PC-9 (cell line): ENCODE measurements at regions of chr4 and their contacts with region 1.

Region 1: DNA sequence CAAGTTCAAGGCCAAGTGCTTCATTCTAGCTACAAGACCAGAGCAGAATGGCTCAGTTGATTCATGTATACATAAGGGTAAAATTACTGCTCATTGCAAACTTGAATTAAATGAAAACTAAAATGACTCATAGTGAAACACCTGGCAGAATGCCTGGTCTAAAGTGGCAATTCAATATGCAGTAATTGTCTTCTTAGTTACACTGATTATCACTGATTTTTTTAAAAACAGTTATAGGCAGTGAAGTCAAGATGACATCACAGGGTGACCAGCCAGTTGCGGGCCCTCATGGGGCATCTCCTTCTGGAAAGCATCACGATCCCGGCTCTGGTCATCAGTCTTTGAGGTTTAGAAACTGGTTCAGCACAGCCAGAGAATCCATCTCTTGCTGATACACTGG is 154.2 kb downstream of the RAB28 start:
- DNase-seq: no peak
- H3K4me3 ChIP-seq: no peak overlapping the region
- H3K27ac ChIP-seq: no peak overlapping the region
- H3K4me1 ChIP-seq: no peaks in the 10 kb centered on the region
- H3K27me3 ChIP-seq: no peaks in the 10 kb centered on the region
- CTCF ChIP-seq: no peak

Region 2: GRCh38 chr4:13399257-13399656 is 69.3 kb after region 1 on chr4:
- CTCF ChIA-PET with region 1: no interaction called
- POLR2A ChIA-PET with region 1: no interaction called
- intact Hi-C with region 1: loop called (anchors 10 kb)
- DNase-seq: no peak
- H3K4me3 ChIP-seq: no peak overlapping the region
- H3K27ac ChIP-seq: no peak overlapping the region
- H3K4me1 ChIP-seq: no peaks in the 10 kb centered on the region
- H3K27me3 ChIP-seq: no peaks in the 10 kb centered on the region
- CTCF ChIP-seq: no peak